ENCODE measurements at regions of chr10 and their contacts with region 1.

Region 1: GRCh38 chr10:73096449-73097304 is at the start of gene P4HA1:
- DNase-seq: peak; percentile 88 to 99 (median 92)
- ATAC-seq: peak; percentile 95
- H3K4me3 ChIP-seq: peak within 1 kb of the TSS; percentile 60
- H3K4me3 Mint-ChIP-seq: peak within 1 kb of the TSS; percentile 91 to 97 (median 96)
- H3K27ac ChIP-seq: peak within 1 kb of the TSS; percentile 97
- H3K27ac Mint-ChIP-seq: peak within 1 kb of the TSS; percentile 76 to 98 (median 92)
- H3K4me1 ChIP-seq: peaks cover 0 to 12% of the 10 kb centered on the region in 2 donors
- H3K4me1 Mint-ChIP-seq: peaks cover 13 to 44% (median 38%) of the 10 kb centered on the region in 7 donors
- H3K27me3 ChIP-seq: no peaks in the 10 kb centered on the region
- H3K27me3 Mint-ChIP-seq: peaks cover 0 to 3% (median 0%) of the 10 kb centered on the region in 5 donors
- total RNA-seq, gene P4HA1: 10.5 to 74.7 (median 14.7) TPM

Region 2: DNA sequence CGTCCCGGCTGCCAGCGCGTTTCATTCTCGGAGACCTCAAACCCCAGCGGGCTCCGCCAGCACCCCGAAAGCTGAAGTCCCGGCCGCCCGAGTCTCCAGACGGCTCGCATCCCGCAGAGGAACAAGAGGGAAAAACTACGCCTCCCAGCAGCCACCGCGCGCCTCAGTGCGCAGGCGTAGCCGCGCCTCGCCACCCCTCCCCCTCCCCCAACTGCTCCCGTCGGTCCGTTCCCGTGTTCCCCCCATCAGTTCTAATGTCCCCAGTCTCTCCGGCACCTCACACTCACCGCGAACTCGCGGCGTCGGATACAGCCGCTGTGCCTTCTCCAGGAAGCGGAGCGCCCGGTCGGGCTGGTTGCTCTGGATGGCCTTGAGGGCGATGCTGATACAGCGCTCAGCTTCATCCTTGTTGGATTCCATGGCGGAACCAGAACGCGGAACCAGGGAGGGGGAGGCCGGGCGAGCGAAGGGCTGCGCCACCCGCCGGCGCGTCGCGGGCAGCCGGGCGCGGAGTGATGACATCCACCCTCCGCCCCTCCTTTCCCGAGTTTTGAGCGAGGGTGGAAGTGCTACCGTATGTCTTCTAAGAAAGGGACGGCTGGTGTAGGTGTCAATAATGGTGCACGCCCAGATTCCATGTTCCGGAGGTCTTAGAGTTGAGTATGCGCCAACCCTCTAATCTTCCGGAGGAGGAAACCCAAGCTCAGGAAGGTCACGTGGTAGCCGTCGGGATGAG is 742.0 kb before region 1 on chr10 and contains the start of gene DNAJB12:
- CTCF ChIA-PET with region 1: no interaction called
- POLR2A ChIA-PET with region 1: interaction called, 3 read pairs
- intact Hi-C with region 1: loop called (anchors 1 to 2 kb)
- DNase-seq: peak; percentile 90 to 96 (median 94)
- ATAC-seq: peak; percentile 94
- H3K4me3 ChIP-seq: peak within 1 kb of the TSS; percentile 98
- H3K4me3 Mint-ChIP-seq: peak within 1 kb of the TSS; percentile 93 to 99 (median 96)
- H3K27ac ChIP-seq: peak within 1 kb of the TSS; percentile 88
- H3K27ac Mint-ChIP-seq: peak within 1 kb of the TSS; percentile 93 to 100 (median 97)
- H3K4me1 ChIP-seq: peaks cover 8 to 13% of the 10 kb centered on the region in 2 donors
- H3K4me1 Mint-ChIP-seq: peaks cover 31 to 59% (median 46%) of the 10 kb centered on the region in 7 donors
- H3K27me3 ChIP-seq: no peaks in the 10 kb centered on the region
- H3K27me3 Mint-ChIP-seq: no peaks in the 10 kb centered on the region
- total RNA-seq, gene DNAJB12: 24.6 to 40.5 (median 36.2) TPM

Region 3: DNA sequence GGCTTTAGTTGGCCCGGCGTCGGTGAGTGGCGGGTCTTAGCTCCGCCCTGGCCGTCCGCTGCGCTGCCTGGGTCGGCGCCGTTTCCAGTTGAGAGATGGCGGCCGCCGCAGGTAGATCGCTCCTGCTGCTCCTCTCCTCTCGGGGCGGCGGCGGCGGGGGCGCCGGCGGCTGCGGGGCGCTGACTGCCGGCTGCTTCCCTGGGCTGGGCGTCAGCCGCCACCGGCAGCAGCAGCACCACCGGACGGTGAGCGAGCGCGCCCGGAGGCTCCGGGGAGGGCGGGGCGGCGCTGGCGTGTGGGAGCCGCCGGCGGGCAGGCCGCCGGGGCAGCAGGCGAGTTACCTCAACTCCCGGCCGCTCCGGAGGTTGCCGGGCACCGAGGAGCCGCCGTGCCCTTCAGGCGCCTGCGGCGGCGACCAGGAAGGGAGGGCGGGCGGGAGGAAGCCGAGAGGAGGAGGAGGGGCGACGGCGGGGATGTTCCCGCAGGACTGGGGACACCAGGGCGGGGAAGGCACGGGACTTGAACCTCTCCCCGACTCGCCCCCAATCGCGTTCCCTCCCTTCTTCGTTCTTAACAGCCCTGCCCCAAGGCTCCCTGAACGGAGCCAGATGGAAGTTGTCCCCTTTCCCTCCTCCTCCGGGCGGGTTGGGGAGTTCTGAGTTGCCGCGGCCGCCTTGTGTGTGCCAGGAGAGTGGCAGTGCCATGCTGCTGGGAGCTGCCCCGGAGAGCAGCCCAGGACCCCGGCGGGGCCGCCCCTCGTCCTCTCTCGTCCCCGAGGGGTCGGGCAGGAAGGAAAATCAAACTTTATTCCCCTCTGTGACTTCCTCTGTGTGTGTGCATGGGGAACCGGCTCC is 404.4 kb before region 1 on chr10 and contains the start of gene MCU:
- CTCF ChIA-PET with region 1: no interaction called
- POLR2A ChIA-PET with region 1: no interaction called
- intact Hi-C with region 1: loop called (anchors 2 kb)
- DNase-seq: peak; percentile 85 to 94 (median 91)
- ATAC-seq: peak; percentile 98
- H3K4me3 ChIP-seq: peak within 1 kb of the TSS; percentile 86
- H3K4me3 Mint-ChIP-seq: peak within 1 kb of the TSS; percentile 84 to 93 (median 91)
- H3K27ac ChIP-seq: peak within 1 kb of the TSS; percentile 68
- H3K27ac Mint-ChIP-seq: peak within 1 kb of the TSS; percentile 5 to 93 (median 76)
- H3K4me1 ChIP-seq: peaks cover 11 to 12% of the 10 kb centered on the region in 2 donors
- H3K4me1 Mint-ChIP-seq: peaks cover 9 to 39% (median 32%) of the 10 kb centered on the region in 7 donors
- H3K27me3 ChIP-seq: no peaks in the 10 kb centered on the region
- H3K27me3 Mint-ChIP-seq: peaks cover 0 to 6% (median 0%) of the 10 kb centered on the region in 5 donors
- total RNA-seq, gene MCU: 7.7 to 14.3 (median 12.7) TPM

Region 4: GRCh38 chr10:73131913-73132686 is 35.4 kb after region 1 on chr10:
- CTCF ChIA-PET with region 1: interaction called, 3 read pairs
- POLR2A ChIA-PET with region 1: interaction called, 4 read pairs
- intact Hi-C with region 1: loop called in 1 of 2 experiments (anchors 2 kb)
- DNase-seq: no peak
- ATAC-seq: no peak
- H3K4me3 ChIP-seq: no peak overlapping the region
- H3K4me3 Mint-ChIP-seq: no peak overlapping the region
- H3K27ac ChIP-seq: no peak overlapping the region
- H3K27ac Mint-ChIP-seq: peak overlapping the region in 1 of 9 donors; percentile 41
- H3K4me1 ChIP-seq: no peaks in the 10 kb centered on the region
- H3K4me1 Mint-ChIP-seq: no peaks in the 10 kb centered on the region
- H3K27me3 ChIP-seq: no peaks in the 10 kb centered on the region
- H3K27me3 Mint-ChIP-seq: no peaks in the 10 kb centered on the region

Region 5: DNA sequence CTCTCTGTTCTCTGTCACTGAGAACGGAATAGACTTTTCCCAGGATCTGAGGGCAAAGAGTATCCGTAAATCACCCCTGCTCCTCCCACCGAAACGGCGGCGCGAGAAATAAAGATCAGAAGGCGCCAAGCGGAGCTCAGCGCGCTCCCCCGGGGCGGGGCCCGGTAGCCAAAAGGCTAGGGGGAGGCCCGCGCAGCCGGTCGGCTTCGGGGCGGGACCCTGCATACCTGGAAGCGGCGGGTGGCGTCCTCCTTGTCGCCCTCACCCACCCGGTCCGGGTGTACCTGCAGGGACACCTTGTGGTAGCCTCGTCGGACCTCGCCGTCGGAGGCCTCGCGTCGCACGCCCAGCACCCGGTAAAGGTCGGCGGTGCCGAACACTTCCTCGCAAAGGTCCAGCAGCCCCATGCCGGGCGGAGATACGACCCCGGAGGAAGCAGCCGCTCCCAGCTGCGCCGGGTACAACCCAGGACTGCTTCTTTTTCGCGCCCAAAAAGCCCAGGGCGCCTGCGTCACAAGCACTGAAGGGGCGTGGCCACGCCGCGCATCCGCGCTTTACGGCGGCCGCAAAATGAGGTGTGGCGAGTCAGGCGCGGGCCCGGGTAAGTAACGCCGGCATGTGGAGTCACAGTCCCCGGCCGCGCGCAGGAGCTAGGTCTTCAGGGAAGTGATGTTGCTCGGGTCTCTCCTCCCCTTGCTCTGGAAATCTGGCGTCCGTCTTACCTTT is 150.3 kb after region 1 on chr10 and contains the start of gene DNAJC9:
- CTCF ChIA-PET with region 1: interaction called, 3 read pairs
- POLR2A ChIA-PET with region 1: interaction called, 6 read pairs
- intact Hi-C with region 1: loop called (anchors 1 to 2 kb)
- DNase-seq: peak; percentile 93 to 98 (median 96)
- ATAC-seq: peak; percentile 95
- H3K4me3 ChIP-seq: peak within 1 kb of the TSS; percentile 71
- H3K4me3 Mint-ChIP-seq: peak within 1 kb of the TSS; percentile 92 to 100 (median 97)
- H3K27ac ChIP-seq: peak within 1 kb of the TSS; percentile 86
- H3K27ac Mint-ChIP-seq: peak within 1 kb of the TSS; percentile 91 to 98 (median 96)
- H3K4me1 ChIP-seq: peaks cover 27 to 37% of the 10 kb centered on the region in 2 donors
- H3K4me1 Mint-ChIP-seq: peaks cover 30 to 69% (median 55%) of the 10 kb centered on the region in 7 donors
- H3K27me3 ChIP-seq: no peaks in the 10 kb centered on the region
- H3K27me3 Mint-ChIP-seq: no peaks in the 10 kb centered on the region
- total RNA-seq, gene DNAJC9: 14.5 to 47.7 (median 26.8) TPM

Region 6: GRCh38 chr10:74151056-74151878 is 1054.6 kb after region 1 on chr10 and contains the start of gene ADK:
- CTCF ChIA-PET with region 1: no interaction called
- POLR2A ChIA-PET with region 1: no interaction called
- intact Hi-C with region 1: loop called in 1 of 2 experiments (anchors 5 kb)
- DNase-seq: peak in 8 of 9 donors; percentile 96 to 100 (median 99)
- ATAC-seq: peak; percentile 99
- H3K4me3 ChIP-seq: peak within 1 kb of the TSS; percentile 90
- H3K4me3 Mint-ChIP-seq: no peak within 1 kb of the TSS
- H3K27ac ChIP-seq: peak within 1 kb of the TSS; percentile 84
- H3K27ac Mint-ChIP-seq: peak within 1 kb of the TSS in 5 of 9 donors; percentile 8 to 78 (median 47)
- H3K4me1 ChIP-seq: peaks cover 17 to 23% of the 10 kb centered on the region in 2 donors
- H3K4me1 Mint-ChIP-seq: peaks cover 36 to 56% (median 47%) of the 10 kb centered on the region in 7 donors
- H3K27me3 ChIP-seq: no peaks in the 10 kb centered on the region
- H3K27me3 Mint-ChIP-seq: no peaks in the 10 kb centered on the region
- total RNA-seq, gene ADK: 20.7 to 32.6 (median 25.0) TPM

Measured in naive thymus-derived CD4-positive, alpha-beta T cell (primary cell).